Caco-2 (cell line): ENCODE measurements at regions of chr13 and their contacts with region 1.

Region 1: DNA sequence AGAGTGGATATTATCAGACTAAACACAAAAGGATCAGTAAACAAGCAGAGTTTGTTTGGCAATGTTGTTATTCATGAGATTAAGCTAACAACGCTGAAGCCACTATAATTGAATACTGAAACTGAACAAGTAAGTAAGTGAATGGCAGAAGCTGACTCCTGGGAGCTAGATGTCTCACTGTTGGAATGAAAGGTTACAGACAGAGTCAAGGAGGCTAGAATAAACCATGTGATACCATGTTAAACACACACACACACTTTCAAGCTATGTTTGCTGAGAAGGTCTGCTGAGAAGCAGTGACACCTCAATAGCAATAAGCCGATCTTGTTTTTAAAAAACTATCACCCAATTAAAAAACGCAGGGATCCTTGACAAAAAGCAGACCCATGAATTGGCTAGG is 1609.4 kb upstream of the MIR17HG start:
- DNase-seq: no peak
- H3K4me3 ChIP-seq: no peak overlapping the region
- H3K4me3 Mint-ChIP-seq: no peak overlapping the region
- H3K27ac Mint-ChIP-seq: no peak overlapping the region
- H3K4me1 ChIP-seq: peaks cover 14% of the 10 kb centered on the region
- H3K4me1 Mint-ChIP-seq: peaks cover 10% of the 10 kb centered on the region
- H3K27me3 ChIP-seq: no peaks in the 10 kb centered on the region
- H3K27me3 Mint-ChIP-seq: no peaks in the 10 kb centered on the region
- CTCF ChIP-seq: no peak

Region 2: GRCh38 chr13:89627991-89628390 is 110.1 kb before region 1 on chr13:
- CTCF ChIA-PET with region 1: no interaction called
- POLR2A ChIA-PET with region 1: no interaction called
- intact Hi-C with region 1: no loop called
- DNase-seq: no peak
- H3K4me3 ChIP-seq: no peak overlapping the region
- H3K4me3 Mint-ChIP-seq: no peak overlapping the region
- H3K27ac Mint-ChIP-seq: no peak overlapping the region
- H3K4me1 ChIP-seq: no peaks in the 10 kb centered on the region
- H3K4me1 Mint-ChIP-seq: no peaks in the 10 kb centered on the region
- H3K27me3 ChIP-seq: no peaks in the 10 kb centered on the region
- H3K27me3 Mint-ChIP-seq: peaks cover 4% of the 10 kb centered on the region
- CTCF ChIP-seq: no peak

Region 3: DNA sequence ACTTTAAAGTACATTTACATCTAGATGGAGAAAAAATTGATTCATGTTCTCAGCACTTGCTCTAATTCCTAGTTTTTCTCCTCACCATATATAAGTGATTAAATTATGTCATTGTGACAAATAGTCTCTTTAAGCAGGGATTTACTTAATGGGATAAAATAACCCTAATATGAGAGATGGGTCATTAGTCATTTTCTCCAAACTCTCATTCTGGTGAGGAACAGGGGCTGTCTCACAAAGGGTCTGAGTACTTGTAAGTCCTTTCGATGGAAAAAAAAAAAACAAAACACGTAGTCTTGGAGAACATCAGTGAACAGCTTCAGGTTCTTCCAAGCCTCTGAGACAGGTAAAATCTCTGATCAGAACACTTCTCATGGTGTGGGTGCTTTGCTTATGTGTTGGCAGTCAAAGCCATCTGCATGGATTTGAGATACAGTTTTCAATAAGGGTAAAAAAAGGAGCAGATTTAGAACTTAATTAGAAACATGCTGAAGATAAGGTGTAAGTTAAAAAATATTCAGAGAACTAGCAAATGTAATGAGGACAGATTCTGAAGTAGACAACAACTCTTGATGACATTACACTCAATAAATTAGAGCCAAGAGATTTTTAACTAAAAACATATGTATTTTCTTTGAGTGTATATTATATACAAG is 59.5 kb before region 1 on chr13:
- CTCF ChIA-PET with region 1: no interaction called
- POLR2A ChIA-PET with region 1: no interaction called
- intact Hi-C with region 1: no loop called
- DNase-seq: no peak
- H3K4me3 ChIP-seq: no peak overlapping the region
- H3K4me3 Mint-ChIP-seq: no peak overlapping the region
- H3K27ac Mint-ChIP-seq: no peak overlapping the region
- H3K4me1 ChIP-seq: no peaks in the 10 kb centered on the region
- H3K4me1 Mint-ChIP-seq: no peaks in the 10 kb centered on the region
- H3K27me3 ChIP-seq: no peaks in the 10 kb centered on the region
- H3K27me3 Mint-ChIP-seq: no peaks in the 10 kb centered on the region
- CTCF ChIP-seq: no peak

Region 4: DNA sequence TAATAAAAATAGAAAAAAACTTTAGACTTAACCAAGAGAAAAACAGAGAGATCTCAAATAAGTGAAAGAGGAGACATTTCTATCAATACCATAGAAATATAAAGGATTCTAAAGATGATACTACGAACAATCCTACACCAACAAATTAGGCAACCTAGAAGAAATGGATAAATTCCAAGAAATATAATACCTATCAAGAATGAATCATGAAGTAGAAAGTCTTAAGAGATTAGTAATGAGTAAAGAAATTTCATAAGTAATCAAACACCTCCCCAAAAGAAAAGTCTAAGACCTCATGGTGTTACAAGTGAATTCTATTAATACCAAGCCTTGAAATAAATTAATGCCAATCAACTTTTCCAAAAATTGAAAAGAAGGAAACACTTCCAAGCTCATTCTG is 24.9 kb after region 1 on chr13:
- CTCF ChIA-PET with region 1: no interaction called
- POLR2A ChIA-PET with region 1: no interaction called
- intact Hi-C with region 1: loop called (anchors 1 kb)
- DNase-seq: no peak
- H3K4me3 ChIP-seq: no peak overlapping the region
- H3K4me3 Mint-ChIP-seq: no peak overlapping the region
- H3K27ac Mint-ChIP-seq: no peak overlapping the region
- H3K4me1 ChIP-seq: no peaks in the 10 kb centered on the region; the same call in 1 of the 2 replicates
- H3K4me1 Mint-ChIP-seq: peaks cover 7% of the 10 kb centered on the region
- H3K27me3 ChIP-seq: no peaks in the 10 kb centered on the region
- H3K27me3 Mint-ChIP-seq: peaks cover 2% of the 10 kb centered on the region
- CTCF ChIP-seq: no peak

Region 5: DNA sequence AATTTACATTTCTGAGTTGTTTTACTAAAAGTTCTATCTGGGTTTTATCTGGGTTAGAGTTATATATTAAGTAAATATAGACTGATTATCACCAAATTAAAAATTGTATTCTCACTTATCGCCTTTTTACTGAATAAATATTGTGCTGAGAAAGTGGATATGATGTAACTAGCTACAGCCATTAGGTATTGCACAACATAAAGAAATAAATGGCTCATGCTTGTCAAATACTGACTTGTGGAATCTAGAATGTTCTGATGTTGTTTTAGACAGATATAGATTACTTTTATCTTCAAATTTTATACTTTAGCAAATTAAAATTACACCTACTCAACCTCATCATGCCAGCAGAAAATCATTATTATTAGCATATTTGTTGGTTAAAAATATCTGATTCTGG is 332.3 kb after region 1 on chr13:
- CTCF ChIA-PET with region 1: no interaction called
- POLR2A ChIA-PET with region 1: no interaction called
- intact Hi-C with region 1: loop called (anchors 1 kb)
- DNase-seq: no peak
- H3K4me3 ChIP-seq: no peak overlapping the region
- H3K4me3 Mint-ChIP-seq: peak overlapping the region; percentile 39
- H3K27ac Mint-ChIP-seq: peak overlapping the region; percentile 57
- H3K4me1 ChIP-seq: peaks cover 14% of the 10 kb centered on the region; the same call in 1 of the 2 replicates
- H3K4me1 Mint-ChIP-seq: peaks cover 10% of the 10 kb centered on the region
- H3K27me3 ChIP-seq: no peaks in the 10 kb centered on the region
- H3K27me3 Mint-ChIP-seq: no peaks in the 10 kb centered on the region
- CTCF ChIP-seq: no peak